ENCODE measurements at regions of chr1 and their contacts with region 1.

Region 1: GRCh38 chr1:62175568-62176179 is 19.0 kb upstream of the L1TD1 start:
- DNase-seq: no peak
- ATAC-seq: peak in 2 of 4 donors; percentile 31 to 56
- H3K4me3 ChIP-seq: no peak overlapping the region
- H3K27ac ChIP-seq: no peak overlapping the region
- H3K4me1 ChIP-seq: no peaks in the 10 kb centered on the region
- H3K27me3 ChIP-seq: peaks cover 0 to 4% (median 0%) of the 10 kb centered on the region in 3 donors
- CTCF ChIP-seq: peak; percentile 79

Region 2: DNA sequence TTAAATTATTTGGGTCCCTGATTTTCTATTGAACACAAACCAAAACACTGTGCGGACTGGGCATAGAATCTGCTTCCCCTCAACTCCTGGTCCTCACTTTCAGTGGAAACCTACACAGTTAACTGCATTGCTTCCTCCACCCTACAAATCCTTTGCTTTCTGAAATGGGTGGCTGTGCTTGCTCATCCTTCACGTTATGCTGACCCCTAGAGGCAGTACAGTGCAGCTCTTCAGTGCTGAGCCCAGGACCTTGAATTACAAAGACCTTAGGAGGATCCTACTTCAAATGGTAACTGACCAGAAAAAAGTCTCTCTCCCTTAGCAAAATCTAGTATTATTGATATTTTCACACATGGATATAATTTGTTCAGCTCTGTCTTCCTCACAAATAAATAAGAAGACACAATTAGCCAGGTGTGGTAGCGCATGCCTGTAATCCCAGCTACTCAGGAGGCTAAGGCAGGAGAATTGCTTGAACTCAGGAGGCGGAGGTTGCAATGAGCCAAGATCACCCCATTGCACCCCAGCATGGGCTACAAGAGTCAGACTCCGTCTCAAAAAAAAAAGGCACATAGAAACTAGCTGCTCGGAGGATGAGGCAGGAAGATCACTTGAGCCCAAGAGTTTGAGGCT is 44.5 kb before region 1 on chr1:
- intact Hi-C with region 1: no loop called
- DNase-seq: no peak
- ATAC-seq: peak; percentile 74 to 88 (median 85)
- H3K4me3 ChIP-seq: no peak overlapping the region
- H3K27ac ChIP-seq: no peak overlapping the region
- H3K4me1 ChIP-seq: no peaks in the 10 kb centered on the region
- H3K27me3 ChIP-seq: no peaks in the 10 kb centered on the region
- CTCF ChIP-seq: peak; percentile 71

Region 3: GRCh38 chr1:62407405-62408009 is 231.8 kb after region 1 on chr1:
- intact Hi-C with region 1: loop called (anchors 1 to 5 kb)
- DNase-seq: no peak
- ATAC-seq: no peak
- H3K4me3 ChIP-seq: no peak overlapping the region
- H3K27ac ChIP-seq: no peak overlapping the region
- H3K4me1 ChIP-seq: no peaks in the 10 kb centered on the region
- H3K27me3 ChIP-seq: no peaks in the 10 kb centered on the region
- CTCF ChIP-seq: peak; percentile 77

Measured in psoas muscle (tissue), 8 donors.